ENCODE measurements at regions of chr1 and their contacts with region 1.

Region 1: DNA sequence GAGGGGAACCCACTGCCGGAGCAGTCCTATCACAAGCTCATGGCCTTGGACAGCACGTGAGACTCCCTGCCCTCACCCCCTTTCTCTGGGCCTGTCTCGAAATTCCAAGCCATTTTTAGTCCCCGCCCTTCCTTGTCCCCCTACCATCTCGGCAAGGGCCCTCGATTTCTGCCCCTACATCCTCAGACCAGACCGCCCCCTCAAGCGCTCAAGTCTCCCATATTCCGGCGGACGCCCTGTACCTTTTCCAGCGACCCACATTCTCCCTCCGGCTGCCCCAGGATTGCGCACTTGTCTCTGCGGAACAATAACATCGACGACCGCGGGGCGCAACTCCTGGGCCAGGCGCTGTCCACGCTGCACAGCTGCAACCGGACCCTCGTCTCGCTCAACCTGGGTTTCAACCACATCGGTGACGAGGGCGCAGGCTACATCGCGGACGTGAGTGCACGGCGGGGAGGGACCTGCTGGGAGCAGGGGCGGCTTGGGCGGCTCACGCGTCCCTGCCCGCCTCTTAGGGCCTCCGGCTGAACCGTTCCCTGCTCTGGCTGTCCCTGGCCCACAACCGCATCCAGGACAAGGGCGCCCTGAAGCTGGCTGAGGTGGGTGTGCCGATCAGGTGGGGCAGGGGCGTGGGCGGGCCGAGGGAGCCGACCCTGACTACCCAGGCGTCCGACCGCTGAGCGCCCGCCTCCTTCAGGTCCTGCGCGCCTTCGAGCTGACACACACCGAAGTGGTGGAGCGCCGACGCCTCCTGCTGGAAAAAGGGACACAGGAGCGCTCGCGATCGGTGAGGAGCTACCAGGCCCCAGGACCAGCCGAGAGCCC is 7.0 kb downstream of the LRRC71 start:
- DNase-seq: peak; percentile 33 to 71
- H3K4me3 ChIP-seq: peak overlapping the region in 2 of 3 donors; percentile 32 to 60
- H3K27ac ChIP-seq: no peak overlapping the region
- H3K4me1 ChIP-seq: peaks cover 5 to 11% of the 10 kb centered on the region in 2 donors
- H3K27me3 ChIP-seq: peaks cover 4 to 44% of the 10 kb centered on the region in 2 donors
- CTCF ChIP-seq: peak in 2 of 3 donors; percentile 52 to 65
- POLR2A ChIP-seq: no peak

Region 2: GRCh38 chr1:156704930-156705320 is 222.5 kb before region 1 on chr1:
- intact Hi-C with region 1: no loop called
- DNase-seq: peak; percentile 46 to 78
- H3K4me3 ChIP-seq: peak overlapping the region; percentile 42 to 72 (median 54)
- H3K27ac ChIP-seq: peak overlapping the region; percentile 92 to 94
- H3K4me1 ChIP-seq: peaks cover 39 to 50% of the 10 kb centered on the region in 2 donors
- H3K27me3 ChIP-seq: no peaks in the 10 kb centered on the region
- CTCF ChIP-seq: no peak
- POLR2A ChIP-seq: no peak

Region 3: DNA sequence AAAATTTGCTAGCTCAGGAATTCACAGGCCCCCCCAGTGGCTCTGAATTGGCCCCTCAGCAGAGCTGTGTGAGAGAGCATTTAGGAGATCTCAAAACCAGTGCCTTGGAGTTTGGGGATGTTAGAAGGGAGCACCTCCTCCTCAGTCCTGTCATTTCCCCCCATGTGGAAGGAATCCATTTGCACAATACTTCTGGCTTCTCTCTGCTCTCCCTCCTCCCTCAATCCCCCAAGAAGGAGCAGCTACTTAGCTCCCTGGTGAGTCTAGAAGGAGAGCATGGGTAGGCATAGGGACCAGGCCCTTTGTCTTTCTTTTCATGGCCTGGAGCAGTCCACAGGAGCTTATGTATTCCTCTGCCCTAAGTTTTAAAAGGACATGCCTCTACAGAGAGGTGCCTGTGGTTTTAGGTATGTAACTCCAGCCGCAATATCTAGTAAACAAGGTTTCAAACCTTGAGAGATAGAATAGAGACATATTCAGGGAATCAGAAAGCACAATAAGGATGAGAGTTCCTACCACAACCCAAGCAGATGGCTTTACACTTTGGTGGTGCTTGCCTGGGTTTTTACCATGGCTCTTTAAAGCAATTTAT is 425.5 kb after region 1 on chr1:
- intact Hi-C with region 1: loop called (anchors 5 kb)
- DNase-seq: no peak
- H3K4me3 ChIP-seq: no peak overlapping the region
- H3K27ac ChIP-seq: no peak overlapping the region
- H3K4me1 ChIP-seq: no peaks in the 10 kb centered on the region
- H3K27me3 ChIP-seq: no peaks in the 10 kb centered on the region
- CTCF ChIP-seq: no peak
- POLR2A ChIP-seq: no peak